A673 (cell line): ENCODE measurements at regions of chrX and their contacts with region 1.

Region 1: DNA sequence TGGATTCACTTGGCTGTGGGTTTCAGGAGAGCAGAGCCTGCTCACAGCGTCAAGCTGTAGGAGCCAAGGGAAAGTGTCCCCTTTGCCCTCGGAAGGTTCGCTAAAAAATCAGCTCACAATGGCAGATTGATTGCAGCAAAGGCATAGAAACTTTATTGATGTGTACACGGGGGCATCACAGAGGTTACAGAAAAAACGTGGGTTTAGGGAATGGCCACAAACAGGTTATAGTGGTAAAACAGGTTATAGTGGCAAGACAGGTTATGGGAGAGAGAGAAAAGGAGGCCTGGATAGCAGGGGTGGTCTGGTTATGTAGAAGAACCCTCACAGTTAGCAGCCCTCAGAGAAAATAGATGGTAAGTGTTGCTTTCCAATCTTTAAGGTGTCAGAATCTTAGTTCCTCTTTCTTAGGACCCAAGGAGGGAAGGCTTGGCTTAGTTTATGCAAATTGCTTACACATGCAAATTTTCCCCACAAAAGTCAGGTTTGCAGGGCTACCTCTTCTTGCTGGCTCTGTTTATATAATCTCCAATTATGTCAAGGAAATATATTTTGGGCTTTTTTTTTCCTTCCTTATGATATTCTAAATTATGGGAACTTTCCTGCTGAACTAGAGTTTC is 113.7 kb downstream of the BMP15 start:
- DNase-seq: no peak
- H3K4me3 ChIP-seq: no peak overlapping the region
- H3K27ac ChIP-seq: no peak overlapping the region
- H3K4me1 ChIP-seq: no peaks in the 10 kb centered on the region
- H3K27me3 ChIP-seq: no peaks in the 10 kb centered on the region
- CTCF ChIP-seq: no peak

Region 2: DNA sequence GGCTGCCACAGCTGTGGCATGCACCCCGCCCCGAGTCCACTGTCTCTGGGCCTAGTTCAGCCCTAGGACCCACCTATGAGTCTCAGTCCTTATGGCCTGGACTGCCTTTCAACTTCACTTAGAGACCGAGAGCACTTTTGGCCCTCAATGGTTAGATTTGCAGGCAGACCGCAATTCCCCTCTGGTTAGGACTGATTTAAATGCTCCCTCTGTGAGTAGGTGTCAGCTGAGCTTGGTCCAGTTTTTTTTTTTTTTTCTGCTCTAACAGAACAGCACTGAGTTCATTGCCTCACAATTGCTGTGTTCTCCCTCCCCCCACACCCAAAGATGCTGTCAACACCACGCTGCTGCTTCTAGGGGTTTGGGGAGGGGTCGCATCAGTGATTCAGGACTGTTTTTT is 29.6 kb after region 1 on chrX:
- CTCF ChIA-PET with region 1: no interaction called
- POLR2A ChIA-PET with region 1: no interaction called
- intact Hi-C with region 1: loop called (anchors 1 kb)
- DNase-seq: no peak
- H3K4me3 ChIP-seq: no peak overlapping the region
- H3K27ac ChIP-seq: no peak overlapping the region
- H3K4me1 ChIP-seq: no peaks in the 10 kb centered on the region
- H3K27me3 ChIP-seq: peaks cover 3% of the 10 kb centered on the region
- CTCF ChIP-seq: no peak